ENCODE measurements at regions of chr20 and their contacts with region 1.

Region 1: DNA sequence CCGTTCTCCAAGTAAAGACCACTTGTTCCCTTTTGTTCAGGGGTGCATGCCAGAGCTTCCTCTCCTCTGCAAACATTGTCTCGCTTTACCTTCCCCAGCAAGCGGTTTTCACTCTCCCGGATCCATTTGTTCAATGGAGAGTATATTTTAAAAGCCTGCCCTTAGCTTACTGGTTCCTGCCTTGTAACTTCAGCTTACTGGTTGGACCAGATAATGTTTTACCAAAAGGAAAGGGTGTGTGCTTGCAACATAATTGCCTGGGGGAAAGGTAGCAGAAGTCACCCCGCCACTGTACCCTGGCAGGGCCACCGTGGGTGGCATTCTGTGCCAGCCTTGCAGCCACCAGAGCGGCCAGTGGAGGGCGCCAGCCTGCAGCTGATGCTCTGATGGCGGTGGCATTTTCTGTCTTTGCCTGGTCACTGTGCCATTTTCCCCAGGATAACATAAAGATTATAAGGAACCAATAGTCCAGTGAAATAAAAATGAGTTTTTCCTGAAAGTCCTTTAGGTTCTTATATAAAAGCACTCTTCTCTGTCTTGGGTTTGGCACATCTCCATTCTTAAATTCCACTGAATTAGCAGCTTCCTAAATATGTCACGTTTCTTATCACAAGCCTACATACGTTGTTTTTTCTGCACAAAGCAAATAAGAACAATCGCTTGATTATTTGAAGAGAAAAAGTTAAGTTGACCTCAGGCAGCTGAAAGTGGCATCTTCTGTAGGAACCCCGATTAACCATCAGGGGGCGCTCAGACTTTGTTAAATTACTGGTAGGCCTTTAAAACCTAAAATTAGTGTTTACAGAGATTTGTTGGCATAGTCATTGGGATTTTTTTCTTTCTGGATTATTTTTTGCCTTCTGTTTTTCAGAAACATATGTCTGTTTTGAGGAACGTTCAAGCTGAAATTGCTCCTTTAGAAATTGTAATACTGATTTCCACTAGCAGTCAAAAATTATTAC is 67.4 kb upstream of the XRN2 start:
- DNase-seq: peak; percentile 74
- H3K4me3 ChIP-seq: no peak overlapping the region
- H3K27ac ChIP-seq: no peak overlapping the region
- H3K4me1 ChIP-seq: no peaks in the 10 kb centered on the region
- H3K27me3 ChIP-seq: no peaks in the 10 kb centered on the region
- CTCF ChIP-seq: peak; percentile 67 to 94
- POLR2A ChIP-seq: no peak

Region 2: GRCh38 chr20:20849161-20849560 is 386.6 kb before region 1 on chr20:
- CTCF ChIA-PET with region 1: no interaction called
- POLR2A ChIA-PET with region 1: no interaction called
- dilution Hi-C with region 1: no loop called
- intact Hi-C with region 1: no loop called
- DNase-seq: no peak
- H3K4me3 ChIP-seq: no peak overlapping the region
- H3K27ac ChIP-seq: no peak overlapping the region
- H3K4me1 ChIP-seq: no peaks in the 10 kb centered on the region
- H3K27me3 ChIP-seq: peaks cover 0 to 3% of the 10 kb centered on the region in 2 experiments
- CTCF ChIP-seq: no peak
- POLR2A ChIP-seq: no peak

Region 3: GRCh38 chr20:21048841-21049273 is 186.9 kb before region 1 on chr20:
- CTCF ChIA-PET with region 1: interaction called, 10 read pairs
- POLR2A ChIA-PET with region 1: no interaction called
- dilution Hi-C with region 1: no loop called
- intact Hi-C with region 1: loop called (anchors 5 kb)
- DNase-seq: peak; percentile 10
- H3K4me3 ChIP-seq: no peak overlapping the region
- H3K27ac ChIP-seq: no peak overlapping the region
- H3K4me1 ChIP-seq: no peaks in the 10 kb centered on the region
- H3K27me3 ChIP-seq: peaks cover 0 to 2% of the 10 kb centered on the region in 2 experiments
- CTCF ChIP-seq: peak; percentile 73 to 81
- POLR2A ChIP-seq: no peak

Region 4: DNA sequence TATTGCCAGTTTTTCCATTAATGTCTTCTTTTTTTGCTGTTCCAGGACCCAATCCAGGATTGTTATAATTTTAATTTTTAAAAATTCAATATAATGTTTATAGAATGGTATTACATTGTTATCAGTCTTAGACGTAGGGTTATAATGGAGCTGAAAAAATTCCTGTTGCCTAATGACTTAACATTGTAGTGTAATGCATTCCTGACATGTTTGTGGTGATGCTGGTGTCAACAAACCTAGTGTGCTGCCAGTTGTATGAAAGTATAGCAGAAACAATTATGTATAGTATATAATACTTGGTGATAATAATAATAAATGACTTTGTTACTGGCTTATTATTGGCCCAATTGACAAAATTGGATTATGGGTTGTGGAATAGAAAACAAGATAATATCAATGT is 79.5 kb before region 1 on chr20:
- CTCF ChIA-PET with region 1: no interaction called
- POLR2A ChIA-PET with region 1: no interaction called
- dilution Hi-C with region 1: no loop called
- intact Hi-C with region 1: no loop called
- DNase-seq: no peak
- H3K4me3 ChIP-seq: no peak overlapping the region
- H3K27ac ChIP-seq: no peak overlapping the region
- H3K4me1 ChIP-seq: no peaks in the 10 kb centered on the region
- H3K27me3 ChIP-seq: no peaks in the 10 kb centered on the region
- CTCF ChIP-seq: no peak
- POLR2A ChIP-seq: no peak

Region 5: DNA sequence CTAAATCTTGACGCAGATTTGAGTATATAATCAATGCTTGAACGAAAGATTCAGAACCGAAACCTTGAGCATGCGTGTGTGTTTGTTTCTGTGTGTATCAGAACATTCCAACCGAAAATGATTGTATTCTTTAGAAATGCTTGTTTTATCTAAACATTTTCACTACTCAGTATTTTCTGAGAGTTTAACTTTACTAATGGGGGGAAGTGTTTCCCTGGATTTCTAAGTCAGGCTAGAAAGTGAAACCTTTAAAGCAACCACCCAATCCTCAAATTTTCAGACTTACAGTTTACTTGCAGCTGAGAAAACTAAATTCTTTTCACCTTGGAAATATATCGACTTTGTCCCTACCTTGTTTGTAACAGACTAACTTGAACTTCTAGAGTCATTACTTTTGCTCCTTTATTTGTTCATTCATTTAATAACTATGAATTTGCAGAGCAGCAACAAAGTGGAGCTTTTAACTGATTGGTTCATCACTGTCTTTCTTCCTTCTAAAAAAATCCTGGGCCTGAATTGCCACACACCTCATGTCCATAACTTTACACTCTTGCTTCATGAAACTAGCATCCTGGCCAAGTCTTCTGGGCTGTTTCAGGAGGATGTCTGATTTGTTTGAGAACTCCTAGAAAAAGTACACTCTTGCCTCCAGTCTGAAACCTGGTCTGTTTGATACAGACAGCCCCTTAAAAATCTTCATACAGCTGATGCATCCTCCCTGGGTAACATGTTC is 10.4 kb before region 1 on chr20:
- CTCF ChIA-PET with region 1: interaction called, 18 read pairs
- POLR2A ChIA-PET with region 1: no interaction called
- dilution Hi-C with region 1: no loop called
- intact Hi-C with region 1: no loop called
- DNase-seq: no peak
- H3K4me3 ChIP-seq: no peak overlapping the region
- H3K27ac ChIP-seq: no peak overlapping the region
- H3K4me1 ChIP-seq: no peaks in the 10 kb centered on the region
- H3K27me3 ChIP-seq: no peaks in the 10 kb centered on the region
- CTCF ChIP-seq: no peak
- POLR2A ChIP-seq: no peak

Region 6: DNA sequence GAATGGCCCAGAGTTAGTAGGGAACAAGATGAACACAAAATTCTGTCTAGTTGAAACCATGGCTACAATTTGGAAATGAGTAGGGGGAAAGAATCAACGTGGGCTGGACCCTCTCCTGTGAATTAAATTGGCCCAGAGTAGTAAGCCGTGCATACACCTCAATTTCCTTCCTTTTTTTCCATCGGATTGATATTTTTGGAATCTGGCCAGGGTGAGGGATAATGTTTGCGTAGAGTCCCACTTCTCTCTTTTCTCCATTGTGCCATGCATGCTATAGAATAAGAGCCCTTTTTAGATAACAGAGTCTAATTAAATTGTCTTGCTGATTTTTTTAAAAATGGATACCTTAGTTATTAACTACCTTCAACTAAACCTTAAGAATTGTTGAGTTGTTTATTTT is 102.5 kb after region 1 on chr20:
- CTCF ChIA-PET with region 1: no interaction called
- POLR2A ChIA-PET with region 1: no interaction called
- dilution Hi-C with region 1: no loop called
- intact Hi-C with region 1: no loop called
- DNase-seq: peak; percentile 51
- H3K4me3 ChIP-seq: no peak overlapping the region
- H3K27ac ChIP-seq: no peak overlapping the region
- H3K4me1 ChIP-seq: peaks cover 17% of the 10 kb centered on the region
- H3K27me3 ChIP-seq: no peaks in the 10 kb centered on the region
- CTCF ChIP-seq: no peak
- POLR2A ChIP-seq: no peak

Region 7: DNA sequence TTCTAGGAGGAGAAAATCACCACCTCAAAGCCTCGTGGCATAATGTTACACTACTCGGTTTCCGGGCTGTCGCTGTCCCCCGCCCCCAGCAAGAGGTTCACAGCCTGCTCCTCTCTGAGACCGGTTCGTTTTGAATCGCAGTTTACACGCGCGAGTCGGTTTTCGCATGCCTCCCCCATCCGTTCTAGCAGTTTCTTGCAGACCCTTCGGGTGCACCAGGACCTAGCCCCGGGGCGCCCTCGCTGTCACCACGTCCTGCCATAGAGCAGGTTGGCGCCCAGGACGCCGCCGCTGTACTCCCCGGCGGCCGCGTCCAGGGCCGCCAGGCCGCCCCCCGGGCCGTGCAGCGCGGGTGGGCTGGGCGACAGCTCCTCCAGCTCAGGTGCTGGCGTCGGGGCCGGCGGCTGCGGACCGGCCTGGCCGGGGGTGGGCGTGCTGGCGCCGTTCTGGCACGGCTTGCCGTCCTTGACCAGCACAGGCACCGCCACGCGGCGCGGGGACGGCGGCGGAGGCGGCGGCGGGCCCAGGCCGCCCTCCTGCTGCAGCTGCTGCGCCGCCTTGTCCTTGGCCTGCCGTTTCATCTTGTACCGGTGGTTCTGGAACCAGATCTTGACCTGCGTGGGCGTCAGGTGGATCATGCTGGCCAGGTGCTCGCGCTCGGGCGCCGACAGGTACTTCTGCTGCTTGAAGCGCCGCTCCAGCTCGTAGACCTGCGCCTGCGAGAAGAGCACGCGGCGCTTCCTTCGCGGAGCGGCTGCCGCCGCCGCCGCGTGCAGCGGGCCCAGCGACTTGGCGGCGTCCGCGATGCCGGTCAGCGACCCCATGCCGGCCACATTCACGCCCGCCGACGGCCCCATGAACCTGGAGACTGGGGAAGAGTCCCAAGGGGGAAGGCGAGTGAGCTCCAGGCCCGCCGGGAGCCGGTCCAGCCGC is 160.2 kb after region 1 on chr20:
- CTCF ChIA-PET with region 1: interaction called, 9 read pairs
- POLR2A ChIA-PET with region 1: no interaction called
- dilution Hi-C with region 1: no loop called
- intact Hi-C with region 1: loop called (anchors 2 kb)
- DNase-seq: peak; percentile 32
- H3K4me3 ChIP-seq: no peak overlapping the region
- H3K27ac ChIP-seq: no peak overlapping the region
- H3K4me1 ChIP-seq: peaks cover 7% of the 10 kb centered on the region
- H3K27me3 ChIP-seq: peaks cover 70 to 100% of the 10 kb centered on the region in 2 experiments
- CTCF ChIP-seq: no peak
- POLR2A ChIP-seq: no peak

Region 8: DNA sequence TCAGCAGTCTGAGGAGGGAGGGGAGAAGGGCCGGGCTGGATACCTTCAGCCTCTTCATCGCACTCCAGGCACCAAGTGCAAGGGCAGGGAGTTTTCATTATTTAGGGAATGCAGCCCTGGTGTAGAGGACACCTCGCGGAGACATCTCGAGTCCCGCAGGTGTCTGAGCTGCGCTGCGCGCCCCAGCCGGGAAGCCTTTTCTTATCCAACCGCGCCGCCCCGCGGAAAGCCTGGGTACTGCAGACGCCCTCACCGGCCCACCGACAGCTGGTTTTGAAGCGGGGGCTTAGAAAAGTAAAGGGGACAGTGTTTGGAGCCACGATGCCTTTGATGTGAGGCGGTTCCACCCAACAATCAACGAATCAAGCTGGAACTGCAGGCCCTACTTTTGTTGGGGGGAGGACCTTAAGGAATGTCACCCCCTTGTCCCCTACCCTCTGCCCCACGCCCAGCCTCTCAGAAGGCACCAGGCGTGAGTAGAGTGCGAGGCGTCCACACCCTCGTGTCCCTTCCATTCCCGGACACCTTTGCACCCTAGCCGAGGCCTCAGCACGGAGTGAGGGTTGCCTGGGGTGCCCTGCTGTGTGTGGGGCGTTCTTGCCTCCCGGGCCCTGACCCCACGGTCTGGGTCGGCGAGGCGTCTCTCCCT is 269.5 kb after region 1 on chr20:
- CTCF ChIA-PET with region 1: interaction called, 443 read pairs
- POLR2A ChIA-PET with region 1: no interaction called
- dilution Hi-C with region 1: no loop called
- intact Hi-C with region 1: loop called (anchors 1 kb)
- DNase-seq: peak; percentile 45
- H3K4me3 ChIP-seq: no peak overlapping the region
- H3K27ac ChIP-seq: no peak overlapping the region
- H3K4me1 ChIP-seq: peaks cover 4% of the 10 kb centered on the region
- H3K27me3 ChIP-seq: peaks cover 40 to 45% of the 10 kb centered on the region in 2 experiments
- CTCF ChIP-seq: peak; percentile 93 to 96
- POLR2A ChIP-seq: no peak

Measured in endothelial cell of umbilical vein (primary cell).